ENCODE measurements at regions of chr15 and their contacts with region 1.

Region 1: DNA sequence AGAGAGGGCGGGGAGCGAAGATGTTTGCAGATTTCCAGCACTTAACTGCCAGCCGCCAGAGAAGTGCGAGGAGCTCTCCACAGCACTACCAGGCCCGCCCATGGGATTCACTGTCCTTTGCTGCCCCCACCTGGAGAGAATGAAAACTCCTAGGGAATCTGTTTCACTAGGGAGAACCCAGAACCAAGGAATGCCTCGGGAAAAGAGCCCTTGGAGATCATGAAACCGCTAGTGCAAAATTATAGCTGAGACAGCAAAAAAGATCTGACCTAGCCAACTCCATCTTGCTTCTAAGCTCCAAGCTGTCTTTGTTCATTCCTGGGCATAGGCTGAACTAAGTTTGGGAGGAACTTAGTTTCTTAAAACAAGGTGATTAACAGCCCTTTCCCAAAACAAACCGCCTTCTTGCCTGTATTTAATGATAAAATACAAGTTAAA is 82.6 kb upstream of the GCNT3 start:
- DNase-seq: peak; percentile 82
- ATAC-seq: peak; percentile 69
- H3K4me3 ChIP-seq: no peak overlapping the region
- H3K4me3 Mint-ChIP-seq: no peak overlapping the region
- H3K27ac ChIP-seq: peak overlapping the region in 1 of 2 donors; percentile 30
- H3K27ac Mint-ChIP-seq: peak overlapping the region; percentile 54
- H3K4me1 ChIP-seq: peaks cover 18 to 33% of the 10 kb centered on the region in 2 donors
- H3K4me1 Mint-ChIP-seq: peaks cover 25% of the 10 kb centered on the region
- H3K27me3 ChIP-seq: no peaks in the 10 kb centered on the region
- H3K27me3 Mint-ChIP-seq: no peaks in the 10 kb centered on the region
- CTCF ChIP-seq: peak; percentile 86

Region 2: GRCh38 chr15:58576657-58577056 is 952.3 kb before region 1 on chr15:
- CTCF ChIA-PET with region 1: no interaction called
- POLR2A ChIA-PET with region 1: interaction called, 12 read pairs
- intact Hi-C with region 1: no loop called
- DNase-seq: no peak
- ATAC-seq: no peak
- H3K4me3 ChIP-seq: no peak overlapping the region
- H3K4me3 Mint-ChIP-seq: no peak overlapping the region
- H3K27ac ChIP-seq: no peak overlapping the region
- H3K27ac Mint-ChIP-seq: no peak overlapping the region
- H3K4me1 ChIP-seq: no peaks in the 10 kb centered on the region
- H3K4me1 Mint-ChIP-seq: peaks cover 3% of the 10 kb centered on the region
- H3K27me3 ChIP-seq: no peaks in the 10 kb centered on the region
- H3K27me3 Mint-ChIP-seq: peaks cover under 1% of the 10 kb centered on the region
- CTCF ChIP-seq: no peak

Region 3: DNA sequence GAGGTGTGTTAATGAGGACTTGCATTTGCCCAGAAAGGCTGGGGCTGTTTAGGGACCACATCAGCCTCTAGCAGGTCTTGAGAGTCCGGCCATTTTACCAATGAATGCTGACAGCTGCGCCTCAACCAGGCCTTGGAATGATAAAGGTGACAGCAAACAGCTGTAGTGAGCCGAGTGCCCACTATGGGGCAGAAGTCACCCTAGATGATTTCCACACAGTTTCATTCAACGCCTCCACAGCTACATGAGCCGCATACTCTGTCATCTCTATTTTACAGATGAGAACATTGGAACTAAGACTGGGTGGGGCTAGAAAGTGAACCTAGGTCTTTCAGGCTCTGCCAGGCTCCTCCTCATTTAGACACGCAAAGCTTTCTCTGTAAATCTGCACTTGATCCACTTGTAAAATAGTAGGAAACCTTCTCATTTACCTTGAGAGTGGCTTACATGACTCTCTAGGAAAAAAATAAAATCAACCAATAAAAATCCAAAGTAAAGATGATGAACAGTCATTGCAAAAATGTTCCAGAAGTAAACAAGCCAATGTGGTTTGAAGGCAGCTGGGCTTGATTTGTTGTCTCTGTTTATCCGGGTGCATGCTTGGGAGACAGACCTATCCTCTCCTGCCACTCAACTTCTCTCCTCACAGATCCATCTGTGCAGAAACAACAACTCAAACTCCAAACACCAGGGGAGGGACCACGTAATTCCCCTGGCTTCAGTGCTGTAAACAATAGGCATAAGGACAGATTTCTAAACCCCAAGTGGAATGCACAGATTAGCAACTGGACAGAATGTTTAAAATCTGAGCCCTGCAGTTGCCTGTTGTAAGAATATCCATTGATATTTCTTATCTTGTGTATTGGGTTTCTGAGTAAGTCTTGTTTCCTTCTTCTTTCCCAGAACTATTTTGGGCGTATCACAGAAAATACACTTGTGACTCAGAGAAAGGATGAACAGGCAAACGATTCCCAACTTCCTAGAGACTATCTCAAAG is 353.9 kb before region 1 on chr15:
- CTCF ChIA-PET with region 1: interaction called, 41 read pairs
- POLR2A ChIA-PET with region 1: no interaction called
- intact Hi-C with region 1: loop called (anchors 1 kb)
- DNase-seq: peak; percentile 57
- ATAC-seq: peak; percentile 94
- H3K4me3 ChIP-seq: no peak overlapping the region
- H3K4me3 Mint-ChIP-seq: no peak overlapping the region
- H3K27ac ChIP-seq: no peak overlapping the region
- H3K27ac Mint-ChIP-seq: no peak overlapping the region
- H3K4me1 ChIP-seq: no peaks in the 10 kb centered on the region
- H3K4me1 Mint-ChIP-seq: peaks cover 7% of the 10 kb centered on the region
- H3K27me3 ChIP-seq: no peaks in the 10 kb centered on the region
- H3K27me3 Mint-ChIP-seq: no peaks in the 10 kb centered on the region
- CTCF ChIP-seq: peak; percentile 55

Region 4: DNA sequence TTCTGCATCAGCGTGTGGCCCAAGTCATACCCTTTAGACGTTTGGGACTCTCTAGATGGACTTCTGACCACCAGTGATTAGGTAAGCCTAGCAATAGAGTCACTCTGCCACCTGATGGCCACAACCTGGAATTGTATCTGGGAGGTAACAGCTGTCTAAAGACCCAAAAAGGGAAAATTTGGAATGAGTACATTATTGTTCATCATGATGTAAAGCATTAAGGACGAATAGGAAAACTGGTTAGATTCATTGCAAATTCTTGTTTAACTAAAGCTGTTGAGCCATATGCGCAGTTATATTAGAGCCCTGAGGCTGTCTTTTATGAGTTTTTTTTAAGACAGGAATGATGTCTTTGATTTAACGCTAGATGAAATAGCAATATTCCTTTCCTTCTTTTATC is 27.4 kb before region 1 on chr15:
- CTCF ChIA-PET with region 1: interaction called, 207 read pairs
- POLR2A ChIA-PET with region 1: no interaction called
- intact Hi-C with region 1: loop called (anchors 2 kb)
- DNase-seq: peak; percentile 42
- ATAC-seq: no peak
- H3K4me3 ChIP-seq: no peak overlapping the region
- H3K4me3 Mint-ChIP-seq: no peak overlapping the region
- H3K27ac ChIP-seq: no peak overlapping the region
- H3K27ac Mint-ChIP-seq: no peak overlapping the region
- H3K4me1 ChIP-seq: no peaks in the 10 kb centered on the region
- H3K4me1 Mint-ChIP-seq: no peaks in the 10 kb centered on the region
- H3K27me3 ChIP-seq: no peaks in the 10 kb centered on the region
- H3K27me3 Mint-ChIP-seq: no peaks in the 10 kb centered on the region
- CTCF ChIP-seq: peak; percentile 64

Region 5: DNA sequence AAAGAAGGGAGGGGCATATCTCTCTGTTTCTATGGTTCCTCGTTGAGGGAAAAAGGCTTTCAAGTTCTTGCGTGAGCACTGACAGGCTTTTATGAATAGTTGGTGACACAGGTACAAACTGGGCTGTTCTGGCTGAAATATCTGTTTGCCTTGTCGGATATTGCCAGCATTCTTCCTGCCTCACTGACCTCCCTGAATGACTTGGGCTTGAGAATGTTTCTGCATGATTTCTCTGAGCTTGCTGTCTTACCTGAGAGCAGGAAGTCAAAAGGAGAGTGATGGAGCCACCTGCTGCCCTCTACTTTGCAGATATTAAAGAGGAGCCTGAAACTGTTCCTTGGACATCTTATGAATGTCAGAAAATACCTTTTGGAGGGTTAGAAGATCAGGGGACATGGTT is 87.4 kb after region 1 on chr15:
- CTCF ChIA-PET with region 1: interaction called, 13 read pairs
- POLR2A ChIA-PET with region 1: no interaction called
- intact Hi-C with region 1: no loop called
- DNase-seq: no peak
- ATAC-seq: no peak
- H3K4me3 ChIP-seq: no peak overlapping the region
- H3K4me3 Mint-ChIP-seq: no peak overlapping the region
- H3K27ac ChIP-seq: no peak overlapping the region
- H3K27ac Mint-ChIP-seq: peak overlapping the region; percentile 23
- H3K4me1 ChIP-seq: peaks cover 11 to 14% of the 10 kb centered on the region in 2 donors
- H3K4me1 Mint-ChIP-seq: peaks cover 17% of the 10 kb centered on the region
- H3K27me3 ChIP-seq: peaks cover 0 to 16% (median 3%) of the 10 kb centered on the region in 4 experiments
- H3K27me3 Mint-ChIP-seq: peaks cover 27% of the 10 kb centered on the region
- CTCF ChIP-seq: no peak

Region 6: GRCh38 chr15:60179786-60180391 is 650.9 kb after region 1 on chr15:
- CTCF ChIA-PET with region 1: interaction called, 14 read pairs
- POLR2A ChIA-PET with region 1: no interaction called
- intact Hi-C with region 1: loop called (anchors 1 kb)
- DNase-seq: peak; percentile 61
- ATAC-seq: peak; percentile 60
- H3K4me3 ChIP-seq: no peak overlapping the region
- H3K4me3 Mint-ChIP-seq: no peak overlapping the region
- H3K27ac ChIP-seq: no peak overlapping the region
- H3K27ac Mint-ChIP-seq: no peak overlapping the region
- H3K4me1 ChIP-seq: no peaks in the 10 kb centered on the region
- H3K4me1 Mint-ChIP-seq: no peaks in the 10 kb centered on the region
- H3K27me3 ChIP-seq: no peaks in the 10 kb centered on the region
- H3K27me3 Mint-ChIP-seq: peaks cover 28% of the 10 kb centered on the region
- CTCF ChIP-seq: peak; percentile 94

Measured in B cell (primary cell).